SK-MEL-5 (cell line): ENCODE measurements at regions of chr2 and their contacts with region 1.

Region 1: GRCh38 chr2:45688479-45689200 is 37.2 kb downstream of the PRKCE start:
- DNase-seq: no peak

Region 2: GRCh38 chr2:45483997-45484396 is 204.6 kb before region 1 on chr2:
- in situ Hi-C with region 1: no loop called
- DNase-seq: peak; percentile 45

Region 3: DNA sequence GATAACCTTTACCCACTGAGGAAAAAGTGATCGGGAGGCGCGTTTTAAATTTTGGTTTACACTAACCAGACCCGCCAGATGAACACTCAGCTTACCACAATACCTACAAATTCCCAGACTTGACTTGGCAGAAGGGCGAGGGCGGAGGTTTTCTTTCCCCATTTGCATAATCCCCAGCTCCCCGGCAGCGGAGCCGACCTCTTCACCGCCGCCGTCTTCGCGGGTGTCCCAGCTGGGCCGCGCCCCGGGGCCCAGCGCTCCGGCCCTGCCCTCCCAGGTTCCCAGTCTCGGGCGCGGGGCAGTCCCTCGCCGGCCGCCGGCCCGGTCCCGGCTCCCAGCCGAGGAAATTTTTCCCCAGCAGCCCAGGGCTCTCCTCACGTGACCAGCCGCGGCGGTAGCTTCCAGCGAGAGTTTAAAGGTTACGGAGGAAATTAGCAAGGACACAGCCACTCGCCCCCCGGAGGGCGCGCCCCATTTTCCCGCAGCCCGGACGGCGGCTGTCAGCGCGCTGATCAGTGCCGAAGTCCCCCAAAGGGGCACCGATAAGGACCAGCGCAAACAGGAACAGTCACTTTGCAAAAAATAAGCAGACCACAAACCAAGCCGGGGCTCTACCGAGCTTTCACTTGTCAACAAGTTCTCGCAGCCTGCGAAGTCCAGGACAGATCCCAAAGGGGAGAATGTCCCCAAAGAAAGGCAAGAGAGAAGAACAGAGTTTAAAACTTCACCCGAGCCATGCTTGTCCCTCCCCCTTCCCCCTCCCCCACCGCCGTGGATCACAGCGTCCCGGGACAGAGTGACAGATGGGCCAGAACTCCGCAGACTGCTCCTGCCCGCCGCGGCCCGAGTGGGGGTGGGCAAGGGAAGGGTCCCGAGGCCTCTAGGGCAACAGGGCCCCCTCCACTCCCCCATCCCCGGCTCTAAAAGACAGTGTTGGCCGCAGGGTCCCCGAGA is 38.5 kb before region 1 on chr2:
- in situ Hi-C with region 1: loop called (anchors 5 kb)
- DNase-seq: peak; percentile 48